Dendritic cell treated with granulocyte-macrophage colony-stimulating factor and Interleukin-4, amounts not matched to agents 40 ng/mL and 50 ng/mL, for 4 days (primary cell): ENCODE measurements at regions of chr2 and their contacts with region 1.

Region 1: DNA sequence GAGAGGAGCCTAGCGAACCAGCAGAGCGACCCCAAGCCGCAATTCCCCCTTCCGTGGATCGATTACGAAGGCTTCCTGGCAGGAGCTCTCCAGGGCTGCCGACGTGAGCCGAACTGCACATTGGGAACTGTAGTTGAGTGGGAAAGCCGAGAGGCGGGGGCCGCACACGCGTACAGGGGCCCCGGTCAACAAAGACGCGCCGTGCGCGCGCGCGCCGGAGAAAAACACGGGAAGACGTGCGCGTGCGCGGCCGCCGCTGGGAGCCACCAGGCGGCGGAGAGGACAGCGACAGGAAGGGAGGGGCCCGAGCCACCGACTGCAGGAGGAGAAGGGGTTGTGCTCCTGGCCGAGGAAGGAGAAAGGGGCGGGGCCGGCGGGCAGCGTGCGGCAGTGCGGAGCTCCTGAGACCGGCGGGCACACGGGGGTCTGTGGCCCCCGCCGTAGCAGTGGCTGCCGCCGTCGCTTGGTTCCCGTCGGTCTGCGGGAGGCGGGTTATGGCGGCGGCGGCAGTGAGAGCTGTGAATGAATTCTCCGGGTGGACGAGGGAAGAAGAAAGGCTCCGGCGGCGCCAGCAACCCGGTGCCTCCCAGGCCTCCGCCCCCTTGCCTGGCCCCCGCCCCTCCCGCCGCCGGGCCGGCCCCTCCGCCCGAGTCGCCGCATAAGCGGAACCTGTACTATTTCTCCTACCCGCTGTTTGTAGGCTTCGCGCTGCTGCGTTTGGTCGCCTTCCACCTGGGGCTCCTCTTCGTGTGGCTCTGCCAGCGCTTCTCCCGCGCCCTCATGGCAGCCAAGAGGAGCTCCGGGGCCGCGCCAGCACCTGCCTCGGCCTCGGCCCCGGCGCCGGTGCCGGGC is at the start of gene SPAST:
- H3K4me3 Mint-ChIP-seq: peak within 1 kb of the TSS; percentile 86
- H3K27ac Mint-ChIP-seq: peak within 1 kb of the TSS; percentile 88
- H3K4me1 Mint-ChIP-seq: peaks cover 32% of the 10 kb centered on the region
- H3K27me3 Mint-ChIP-seq: no peaks in the 10 kb centered on the region

Region 2: DNA sequence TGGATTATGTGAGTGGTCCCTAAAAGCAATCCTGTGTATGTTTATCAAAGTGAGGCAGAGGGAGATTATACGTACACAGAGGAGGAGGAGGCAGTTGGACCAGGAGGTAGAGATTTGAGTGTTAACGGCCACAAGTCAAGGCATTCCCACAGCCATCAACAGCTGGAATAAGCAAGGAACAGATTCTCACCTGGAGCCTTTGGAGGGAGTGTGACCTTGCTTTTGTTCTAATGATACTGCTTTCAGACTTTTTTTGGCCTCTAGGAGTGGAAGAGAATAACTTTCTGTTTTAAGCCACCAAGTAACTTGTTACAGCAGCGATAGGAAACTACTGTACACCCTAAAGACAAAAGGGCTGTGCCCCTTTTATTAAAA is 1598.4 kb before region 1 on chr2:
- intact Hi-C with region 1: no loop called
- H3K4me3 Mint-ChIP-seq: no peak overlapping the region
- H3K27ac Mint-ChIP-seq: no peak overlapping the region
- H3K4me1 Mint-ChIP-seq: peaks cover 4% of the 10 kb centered on the region
- H3K27me3 Mint-ChIP-seq: no peaks in the 10 kb centered on the region

Region 3: DNA sequence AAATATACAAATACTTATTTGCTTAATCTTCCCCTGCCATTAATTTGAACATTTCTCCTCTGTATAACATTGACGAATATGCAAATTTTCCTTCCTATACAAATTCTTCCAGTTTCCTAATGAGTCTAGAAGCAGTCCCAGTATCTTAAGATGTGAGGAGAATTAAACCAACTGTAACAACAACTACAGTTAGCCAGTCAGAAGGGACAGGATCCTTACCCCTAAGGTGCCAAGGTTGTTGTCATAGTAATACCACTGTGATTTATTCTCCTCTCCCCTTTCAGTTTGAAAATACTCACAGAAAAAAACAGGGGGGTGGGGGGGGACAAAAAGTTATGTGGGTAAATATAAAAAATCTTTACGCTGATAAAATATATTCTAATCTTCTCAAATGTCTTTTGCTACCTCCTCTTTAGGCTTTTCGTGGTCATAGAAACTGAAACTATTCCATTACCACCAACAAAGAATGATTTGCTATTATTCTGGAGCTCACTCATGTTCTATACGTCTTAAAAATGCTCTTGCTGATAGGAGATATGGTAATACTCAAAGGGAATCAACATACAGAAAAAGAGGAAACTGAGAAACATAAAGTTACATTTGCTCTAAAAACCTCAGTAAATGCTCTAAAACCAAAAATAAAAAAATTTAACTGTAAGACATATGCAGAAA is 160.3 kb before region 1 on chr2:
- intact Hi-C with region 1: no loop called
- H3K4me3 Mint-ChIP-seq: no peak overlapping the region
- H3K27ac Mint-ChIP-seq: no peak overlapping the region
- H3K4me1 Mint-ChIP-seq: no peaks in the 10 kb centered on the region
- H3K27me3 Mint-ChIP-seq: no peaks in the 10 kb centered on the region

Region 4: DNA sequence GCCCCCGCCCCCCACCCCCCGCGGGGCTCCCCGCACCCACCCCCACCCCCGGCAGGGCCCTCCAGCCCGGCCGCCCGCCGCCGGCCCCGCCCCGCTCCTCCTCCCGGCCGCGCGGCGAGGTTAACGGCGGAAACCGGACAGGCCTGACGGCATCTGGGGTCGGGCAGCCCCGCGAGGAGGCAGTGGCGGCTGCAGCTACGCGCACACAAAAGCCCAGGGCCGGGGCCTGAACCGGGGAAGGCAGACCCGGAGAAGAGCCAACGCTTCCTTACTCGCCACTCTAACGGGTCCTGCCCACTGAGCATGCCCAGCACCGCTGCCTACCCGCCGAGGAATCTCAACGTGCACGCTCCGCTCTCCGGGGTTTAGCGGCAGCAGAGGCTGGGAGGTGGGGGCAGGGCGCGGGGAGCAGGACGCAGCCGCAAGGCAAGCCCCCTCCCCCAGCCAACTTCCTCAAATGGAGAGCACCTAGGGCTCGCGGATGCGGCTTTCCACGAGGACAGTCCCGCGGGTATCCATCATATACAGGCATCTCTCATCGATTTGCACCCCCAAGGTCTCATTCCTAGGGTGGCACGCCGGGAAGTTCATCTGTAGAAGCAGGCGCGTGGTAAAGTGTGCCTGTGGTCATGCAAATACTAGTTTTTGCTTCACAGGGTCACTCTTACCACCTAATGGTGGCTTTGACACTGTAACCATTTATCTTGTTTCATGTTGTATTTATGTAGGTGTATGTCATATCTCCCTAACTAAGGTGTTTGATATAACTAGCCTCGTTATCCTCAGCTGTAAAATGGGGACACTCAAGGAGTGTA is 52.7 kb before region 1 on chr2 and contains the start of gene MEMO1:
- intact Hi-C with region 1: loop called (anchors 2 kb)
- H3K4me3 Mint-ChIP-seq: peak within 1 kb of the TSS; percentile 98
- H3K27ac Mint-ChIP-seq: peak within 1 kb of the TSS; percentile 92
- H3K4me1 Mint-ChIP-seq: peaks cover 35% of the 10 kb centered on the region
- H3K27me3 Mint-ChIP-seq: no peaks in the 10 kb centered on the region

Region 5: GRCh38 chr2:32039447-32040219 is 23.9 kb before region 1 on chr2 and contains the start of gene DPY30:
- intact Hi-C with region 1: loop called (anchors 2 kb)
- H3K4me3 Mint-ChIP-seq: peak within 1 kb of the TSS; percentile 84
- H3K27ac Mint-ChIP-seq: peak within 1 kb of the TSS; percentile 92
- H3K4me1 Mint-ChIP-seq: peaks cover 7% of the 10 kb centered on the region
- H3K27me3 Mint-ChIP-seq: no peaks in the 10 kb centered on the region

Region 6: GRCh38 chr2:32135409-32135808 is 71.9 kb after region 1 on chr2:
- intact Hi-C with region 1: loop called (anchors 10 kb)
- H3K4me3 Mint-ChIP-seq: no peak overlapping the region
- H3K27ac Mint-ChIP-seq: no peak overlapping the region
- H3K4me1 Mint-ChIP-seq: peaks cover 17% of the 10 kb centered on the region
- H3K27me3 Mint-ChIP-seq: no peaks in the 10 kb centered on the region

Region 7: DNA sequence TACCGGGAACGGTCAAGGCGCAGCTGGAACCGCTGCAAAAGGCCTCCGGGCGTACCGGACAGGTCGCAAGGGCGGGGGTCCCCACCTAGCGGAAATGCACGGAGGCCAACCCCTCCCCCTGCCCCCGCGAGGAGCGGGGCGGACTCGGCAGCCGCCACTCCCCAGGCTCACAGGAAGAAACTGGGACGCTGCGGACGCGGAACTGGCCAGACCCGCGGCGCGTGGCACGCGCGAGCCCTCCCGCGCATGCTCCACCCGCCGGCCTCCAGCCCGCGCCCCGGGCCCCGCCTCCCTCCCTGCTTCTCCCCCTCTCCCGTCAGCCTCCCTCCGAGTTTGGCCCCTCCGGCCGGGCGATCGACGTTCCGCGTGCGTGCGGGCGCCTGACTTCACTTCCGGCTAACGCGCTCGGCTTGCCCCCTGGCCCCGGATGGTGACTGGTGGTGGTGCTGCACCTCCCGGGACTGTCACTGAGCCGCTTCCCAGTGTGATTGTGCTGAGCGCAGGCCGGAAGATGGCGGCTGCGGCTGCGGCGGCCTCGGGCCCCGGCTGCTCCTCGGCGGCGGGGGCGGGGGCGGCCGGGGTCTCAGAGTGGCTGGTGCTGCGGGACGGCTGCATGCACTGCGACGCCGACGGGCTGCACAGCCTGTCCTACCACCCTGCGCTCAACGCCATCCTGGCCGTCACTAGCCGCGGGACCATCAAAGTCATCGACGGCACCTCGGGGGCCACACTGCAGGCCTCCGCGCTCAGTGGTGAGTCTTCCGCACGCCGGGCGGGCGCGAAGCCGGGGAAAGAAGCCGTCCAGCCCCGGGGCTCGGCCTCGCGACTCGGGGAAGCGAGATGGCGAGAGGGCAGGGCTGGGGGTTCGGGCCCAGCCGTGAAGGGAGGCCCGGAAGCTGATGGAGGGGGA is 293.5 kb after region 1 on chr2 and contains the start of gene BIRC6:
- intact Hi-C with region 1: loop called (anchors 5 kb)
- H3K4me3 Mint-ChIP-seq: peak within 1 kb of the TSS; percentile 94
- H3K27ac Mint-ChIP-seq: peak within 1 kb of the TSS; percentile 94
- H3K4me1 Mint-ChIP-seq: peaks cover 34% of the 10 kb centered on the region
- H3K27me3 Mint-ChIP-seq: no peaks in the 10 kb centered on the region